Activated CD4-positive, alpha-beta T cell treated with anti-CD3 and anti-CD28 coated beads for 36 hours (primary cell): ENCODE measurements at regions of chr10 and their contacts with region 1.

Region 1: GRCh38 chr10:62816331-62817120 is at the start of gene EGR2:
- DNase-seq: peak; percentile 96
- ATAC-seq: peak; percentile 77
- H3K4me3 Mint-ChIP-seq: peak within 1 kb of the TSS; percentile 99
- H3K27ac Mint-ChIP-seq: peak within 1 kb of the TSS; percentile 99
- H3K4me1 Mint-ChIP-seq: peaks cover 46% of the 10 kb centered on the region
- H3K27me3 Mint-ChIP-seq: peaks cover 19% of the 10 kb centered on the region
- total RNA-seq, gene EGR2: 46.0 to 53.9 TPM

Region 2: GRCh38 chr10:61992671-61993668 is 823.6 kb before region 1 on chr10:
- CTCF ChIA-PET with region 1: interaction called, 3 read pairs
- POLR2A ChIA-PET with region 1: no interaction called
- intact Hi-C with region 1: loop called (anchors 1 to 2 kb)
- DNase-seq: peak; percentile 74
- ATAC-seq: peak; percentile 50
- H3K4me3 Mint-ChIP-seq: peak overlapping the region; percentile 64
- H3K27ac Mint-ChIP-seq: peak overlapping the region; percentile 95
- H3K4me1 Mint-ChIP-seq: peaks cover 87% of the 10 kb centered on the region
- H3K27me3 Mint-ChIP-seq: no peaks in the 10 kb centered on the region

Region 3: DNA sequence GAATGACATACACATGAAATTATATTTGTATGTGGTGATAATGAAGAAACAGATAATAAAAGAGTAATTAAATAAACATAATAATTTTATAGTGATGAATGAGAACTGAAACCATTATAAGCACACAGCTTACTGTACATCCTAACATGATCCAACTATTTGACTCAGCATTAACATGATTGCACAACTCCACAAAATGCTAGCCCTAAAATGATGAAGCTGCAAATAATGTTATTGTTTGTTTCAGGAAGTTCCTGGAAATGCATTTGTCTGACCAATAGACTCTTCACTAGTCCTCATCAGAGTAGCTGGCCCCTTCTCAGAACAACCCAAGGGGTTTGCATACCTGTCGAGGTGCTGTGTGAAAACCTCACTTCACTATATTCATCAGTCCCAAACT is 663.3 kb before region 1 on chr10:
- CTCF ChIA-PET with region 1: no interaction called
- POLR2A ChIA-PET with region 1: no interaction called
- intact Hi-C with region 1: no loop called
- DNase-seq: no peak
- ATAC-seq: no peak
- H3K4me3 Mint-ChIP-seq: no peak overlapping the region
- H3K27ac Mint-ChIP-seq: no peak overlapping the region
- H3K4me1 Mint-ChIP-seq: peaks cover 5% of the 10 kb centered on the region
- H3K27me3 Mint-ChIP-seq: no peaks in the 10 kb centered on the region

Region 4: GRCh38 chr10:62594093-62594520 is 222.4 kb before region 1 on chr10:
- CTCF ChIA-PET with region 1: interaction called, 10 read pairs
- POLR2A ChIA-PET with region 1: no interaction called
- intact Hi-C with region 1: loop called (anchors 1 to 5 kb)
- DNase-seq: peak; percentile 71
- ATAC-seq: peak; percentile 84
- H3K4me3 Mint-ChIP-seq: no peak overlapping the region
- H3K27ac Mint-ChIP-seq: no peak overlapping the region
- H3K4me1 Mint-ChIP-seq: peaks cover 4% of the 10 kb centered on the region
- H3K27me3 Mint-ChIP-seq: peaks cover 14% of the 10 kb centered on the region

Region 5: DNA sequence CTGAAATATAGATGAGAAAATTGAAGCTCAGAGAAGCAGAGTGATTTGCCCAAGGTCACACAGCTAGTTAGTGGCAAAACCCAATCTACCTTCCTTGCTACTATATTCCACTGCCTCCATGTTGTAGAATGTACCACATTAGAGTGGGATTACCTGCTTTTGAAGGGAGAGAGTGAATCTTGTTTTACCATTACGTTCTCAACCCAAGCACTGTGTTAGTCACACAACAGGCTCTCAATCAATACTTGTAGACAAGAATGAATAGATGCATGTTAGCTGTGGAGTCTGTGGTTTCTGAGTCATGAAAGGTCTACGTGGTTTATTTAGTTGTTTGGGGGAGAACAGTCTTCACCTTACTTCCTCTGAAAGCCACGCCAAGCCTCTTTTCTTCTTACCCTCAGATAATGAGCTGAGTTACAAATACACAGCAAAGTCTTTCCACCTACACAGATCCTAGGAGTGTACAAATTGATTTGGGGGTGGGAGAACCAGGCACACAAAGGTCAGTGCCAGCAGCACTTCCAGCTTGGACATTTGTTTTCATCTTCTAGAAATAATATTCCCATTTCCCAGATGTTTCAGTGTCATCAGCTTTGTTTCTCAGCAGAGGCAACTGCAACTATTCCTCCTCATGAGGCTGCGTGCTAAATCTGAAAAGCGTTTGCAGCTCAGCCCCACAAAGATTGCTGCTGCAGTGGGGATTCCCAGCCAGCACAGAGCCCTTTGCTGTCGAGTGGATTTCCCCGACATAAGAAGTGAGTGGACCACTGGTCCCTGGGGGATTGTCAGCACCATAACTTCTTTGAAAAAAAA is 83.5 kb before region 1 on chr10:
- CTCF ChIA-PET with region 1: interaction called, 7 read pairs
- POLR2A ChIA-PET with region 1: interaction called, 17 read pairs
- intact Hi-C with region 1: loop called (anchors 1 kb)
- DNase-seq: peak; percentile 79
- ATAC-seq: peak; percentile 87
- H3K4me3 Mint-ChIP-seq: peak overlapping the region; percentile 3
- H3K27ac Mint-ChIP-seq: no peak overlapping the region
- H3K4me1 Mint-ChIP-seq: peaks cover 25% of the 10 kb centered on the region
- H3K27me3 Mint-ChIP-seq: peaks cover 5% of the 10 kb centered on the region

Region 6: DNA sequence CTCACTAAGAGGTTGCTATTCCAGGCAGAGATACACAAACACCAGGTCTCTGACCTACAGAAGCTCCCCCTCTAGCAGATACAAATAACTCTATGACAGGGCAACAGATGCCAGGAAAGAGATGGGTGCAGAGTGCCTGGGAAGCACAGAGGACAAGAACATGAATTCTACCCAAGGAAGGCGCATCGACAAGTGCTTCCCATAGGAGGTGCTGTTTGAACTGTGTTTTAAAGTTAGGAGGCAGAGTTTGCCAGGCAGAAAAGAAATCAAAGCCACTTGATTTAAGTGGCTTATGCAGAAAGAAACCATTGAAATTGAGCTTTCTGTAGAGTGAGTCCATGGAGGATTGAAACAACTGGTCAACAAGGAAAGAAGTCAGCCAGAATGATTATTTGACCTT is 34.9 kb after region 1 on chr10:
- CTCF ChIA-PET with region 1: interaction called, 11 read pairs
- POLR2A ChIA-PET with region 1: interaction called, 6 read pairs
- intact Hi-C with region 1: loop called (anchors 1 kb)
- DNase-seq: peak; percentile 51
- ATAC-seq: no peak
- H3K4me3 Mint-ChIP-seq: no peak overlapping the region
- H3K27ac Mint-ChIP-seq: no peak overlapping the region
- H3K4me1 Mint-ChIP-seq: peaks cover 47% of the 10 kb centered on the region
- H3K27me3 Mint-ChIP-seq: peaks cover 20% of the 10 kb centered on the region

Region 7: GRCh38 chr10:63157845-63158624 is 341.5 kb after region 1 on chr10:
- CTCF ChIA-PET with region 1: interaction called, 8 read pairs
- POLR2A ChIA-PET with region 1: no interaction called
- intact Hi-C with region 1: loop called (anchors 2 kb)
- DNase-seq: peak; percentile 61
- ATAC-seq: peak; percentile 61
- H3K4me3 Mint-ChIP-seq: no peak overlapping the region
- H3K27ac Mint-ChIP-seq: no peak overlapping the region
- H3K4me1 Mint-ChIP-seq: peaks cover 6% of the 10 kb centered on the region
- H3K27me3 Mint-ChIP-seq: no peaks in the 10 kb centered on the region

Region 8: GRCh38 chr10:63707254-63707910 is 890.9 kb after region 1 on chr10:
- CTCF ChIA-PET with region 1: no interaction called
- POLR2A ChIA-PET with region 1: no interaction called
- intact Hi-C with region 1: loop called in 1 of 2 experiments (anchors 2 kb)
- DNase-seq: peak; percentile 39
- ATAC-seq: peak; percentile 94
- H3K4me3 Mint-ChIP-seq: no peak overlapping the region
- H3K27ac Mint-ChIP-seq: no peak overlapping the region
- H3K4me1 Mint-ChIP-seq: peaks cover 19% of the 10 kb centered on the region
- H3K27me3 Mint-ChIP-seq: no peaks in the 10 kb centered on the region